ENCODE measurements at regions of chr1 and their contacts with region 1.

Region 1: GRCh38 chr1:154558575-154559465 is at the start of gene UBE2Q1:
- DNase-seq: peak; percentile 99
- H3K4me3 Mint-ChIP-seq: peak within 1 kb of the TSS; percentile 76
- H3K27ac Mint-ChIP-seq: peak within 1 kb of the TSS; percentile 65
- H3K4me1 Mint-ChIP-seq: peaks cover 18% of the 10 kb centered on the region
- H3K27me3 Mint-ChIP-seq: no peaks in the 10 kb centered on the region
- CTCF ChIP-seq: no peak
- total RNA-seq, gene UBE2Q1: 103 and 111 TPM in 2 replicates

Region 2: GRCh38 chr1:154519591-154519991 is 39.2 kb before region 1 on chr1:
- CTCF ChIA-PET with region 1: no interaction called
- POLR2A ChIA-PET with region 1: no interaction called
- intact Hi-C with region 1: no loop called
- DNase-seq: no peak
- H3K4me3 Mint-ChIP-seq: no peak overlapping the region
- H3K27ac Mint-ChIP-seq: no peak overlapping the region
- H3K4me1 Mint-ChIP-seq: peaks cover 15% of the 10 kb centered on the region
- H3K27me3 Mint-ChIP-seq: peaks cover 51% of the 10 kb centered on the region
- CTCF ChIP-seq: no peak

Region 3: GRCh38 chr1:154533952-154534844 is 24.6 kb before region 1 on chr1:
- CTCF ChIA-PET with region 1: interaction called, 14 read pairs
- POLR2A ChIA-PET with region 1: interaction called, 5 read pairs
- intact Hi-C with region 1: no loop called
- DNase-seq: peak; percentile 76
- H3K4me3 Mint-ChIP-seq: no peak overlapping the region
- H3K27ac Mint-ChIP-seq: no peak overlapping the region
- H3K4me1 Mint-ChIP-seq: no peaks in the 10 kb centered on the region
- H3K27me3 Mint-ChIP-seq: peaks cover 40% of the 10 kb centered on the region
- CTCF ChIP-seq: peak; percentile 81

Region 4: GRCh38 chr1:154589780-154590179 is 31.0 kb after region 1 on chr1:
- CTCF ChIA-PET with region 1: interaction called, 12 read pairs
- POLR2A ChIA-PET with region 1: interaction called, 5 read pairs
- intact Hi-C with region 1: no loop called
- DNase-seq: no peak
- H3K4me3 Mint-ChIP-seq: no peak overlapping the region
- H3K27ac Mint-ChIP-seq: no peak overlapping the region
- H3K4me1 Mint-ChIP-seq: no peaks in the 10 kb centered on the region
- H3K27me3 Mint-ChIP-seq: no peaks in the 10 kb centered on the region
- CTCF ChIP-seq: no peak

Region 5: DNA sequence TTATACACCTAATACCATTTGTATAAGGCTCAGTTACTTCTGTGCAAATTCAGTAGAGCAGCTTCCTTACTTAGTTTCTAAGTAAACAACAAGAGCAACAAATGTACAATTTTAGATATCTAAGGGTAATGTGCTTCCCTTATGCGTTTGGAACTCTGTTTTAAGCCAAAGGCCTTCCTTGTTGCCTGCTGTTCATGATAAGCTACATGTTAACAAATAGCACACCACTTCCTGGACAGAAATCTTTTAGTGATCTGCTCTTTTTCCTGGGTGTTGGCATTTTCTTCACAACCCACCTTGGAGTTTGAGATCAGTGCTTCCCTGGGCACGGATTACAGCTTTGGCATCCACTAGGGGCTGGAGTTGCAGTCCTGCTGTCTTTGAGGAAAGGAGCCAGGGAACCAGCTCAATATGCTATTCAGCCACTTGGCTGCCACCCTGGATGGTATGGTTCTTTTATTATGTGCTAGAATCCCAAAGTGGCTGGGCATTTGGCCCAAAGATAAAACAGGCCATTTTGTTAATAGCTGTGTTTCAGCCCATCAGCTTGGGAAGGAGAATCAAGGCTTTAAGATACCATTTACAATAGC is 104.7 kb after region 1 on chr1:
- CTCF ChIA-PET with region 1: interaction called, 20 read pairs
- POLR2A ChIA-PET with region 1: no interaction called
- intact Hi-C with region 1: no loop called
- DNase-seq: no peak
- H3K4me3 Mint-ChIP-seq: no peak overlapping the region
- H3K27ac Mint-ChIP-seq: no peak overlapping the region
- H3K4me1 Mint-ChIP-seq: no peaks in the 10 kb centered on the region
- H3K27me3 Mint-ChIP-seq: peaks cover 63% of the 10 kb centered on the region
- CTCF ChIP-seq: no peak

Region 6: GRCh38 chr1:154812911-154813816 is 254.3 kb after region 1 on chr1:
- CTCF ChIA-PET with region 1: interaction called, 6 read pairs
- POLR2A ChIA-PET with region 1: interaction called, 4 read pairs
- intact Hi-C with region 1: loop called (anchors 1 kb)
- DNase-seq: peak; percentile 94
- H3K4me3 Mint-ChIP-seq: peak overlapping the region; percentile 2
- H3K27ac Mint-ChIP-seq: peak overlapping the region; percentile 86
- H3K4me1 Mint-ChIP-seq: peaks cover 25% of the 10 kb centered on the region
- H3K27me3 Mint-ChIP-seq: peaks cover 5% of the 10 kb centered on the region
- CTCF ChIP-seq: no peak

Region 7: GRCh38 chr1:154974063-154974807 is 415.4 kb after region 1 on chr1 and contains the start of gene CKS1B:
- CTCF ChIA-PET with region 1: interaction called, 5 read pairs
- POLR2A ChIA-PET with region 1: interaction called, 14 read pairs
- intact Hi-C with region 1: no loop called
- DNase-seq: peak; percentile 100
- H3K4me3 Mint-ChIP-seq: no peak within 1 kb of the TSS
- H3K27ac Mint-ChIP-seq: no peak within 1 kb of the TSS
- H3K4me1 Mint-ChIP-seq: peaks cover 32% of the 10 kb centered on the region
- H3K27me3 Mint-ChIP-seq: no peaks in the 10 kb centered on the region
- CTCF ChIP-seq: no peak
- total RNA-seq, gene CKS1B: 285 and 289 TPM in 2 replicates